ENCODE measurements at regions of chr2 and their contacts with region 1.

Region 1: DNA sequence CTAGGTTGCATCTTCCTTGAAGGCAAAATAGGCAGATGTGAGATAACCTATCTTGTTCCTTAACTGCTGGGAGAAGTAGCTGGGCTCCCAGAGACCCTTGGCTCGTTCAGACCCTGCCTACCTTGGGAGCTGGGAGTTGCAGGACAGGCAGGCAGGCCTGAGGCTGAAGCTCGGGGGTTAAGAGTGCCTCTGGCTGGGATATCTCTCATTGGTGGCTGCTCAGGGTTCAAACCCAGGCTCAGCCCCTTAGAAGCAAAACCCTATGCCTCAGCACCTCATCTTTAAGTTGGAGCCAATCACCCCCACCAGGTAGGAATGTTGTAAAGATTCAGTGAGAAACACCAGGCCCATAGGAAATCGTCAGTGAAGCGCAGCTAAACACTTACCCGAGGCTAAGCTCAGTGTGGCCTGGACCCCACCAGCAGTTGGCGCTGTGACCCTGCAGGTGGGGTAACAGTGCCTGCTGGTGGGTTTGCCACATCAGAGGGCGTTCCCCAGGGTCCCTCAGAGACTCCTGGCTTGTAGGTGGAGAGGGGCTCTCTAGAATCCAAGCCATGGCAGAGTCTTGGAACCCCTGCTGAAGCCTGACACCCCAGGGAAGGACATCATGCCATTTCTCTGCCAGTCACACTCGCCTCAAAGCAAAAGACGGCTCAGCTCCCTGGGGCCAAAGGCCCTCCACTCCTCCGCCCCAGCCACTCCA is 54.6 kb upstream of the GPR17 start:
- DNase-seq: no peak
- H3K4me3 ChIP-seq: no peak overlapping the region
- CTCF ChIP-seq: peak; percentile 95

Region 2: GRCh38 chr2:126907671-126908070 is 683.7 kb before region 1 on chr2:
- CTCF ChIA-PET with region 1: no interaction called
- POLR2A ChIA-PET with region 1: no interaction called
- DNase-seq: no peak
- H3K4me3 ChIP-seq: no peak overlapping the region
- CTCF ChIP-seq: no peak

Region 3: DNA sequence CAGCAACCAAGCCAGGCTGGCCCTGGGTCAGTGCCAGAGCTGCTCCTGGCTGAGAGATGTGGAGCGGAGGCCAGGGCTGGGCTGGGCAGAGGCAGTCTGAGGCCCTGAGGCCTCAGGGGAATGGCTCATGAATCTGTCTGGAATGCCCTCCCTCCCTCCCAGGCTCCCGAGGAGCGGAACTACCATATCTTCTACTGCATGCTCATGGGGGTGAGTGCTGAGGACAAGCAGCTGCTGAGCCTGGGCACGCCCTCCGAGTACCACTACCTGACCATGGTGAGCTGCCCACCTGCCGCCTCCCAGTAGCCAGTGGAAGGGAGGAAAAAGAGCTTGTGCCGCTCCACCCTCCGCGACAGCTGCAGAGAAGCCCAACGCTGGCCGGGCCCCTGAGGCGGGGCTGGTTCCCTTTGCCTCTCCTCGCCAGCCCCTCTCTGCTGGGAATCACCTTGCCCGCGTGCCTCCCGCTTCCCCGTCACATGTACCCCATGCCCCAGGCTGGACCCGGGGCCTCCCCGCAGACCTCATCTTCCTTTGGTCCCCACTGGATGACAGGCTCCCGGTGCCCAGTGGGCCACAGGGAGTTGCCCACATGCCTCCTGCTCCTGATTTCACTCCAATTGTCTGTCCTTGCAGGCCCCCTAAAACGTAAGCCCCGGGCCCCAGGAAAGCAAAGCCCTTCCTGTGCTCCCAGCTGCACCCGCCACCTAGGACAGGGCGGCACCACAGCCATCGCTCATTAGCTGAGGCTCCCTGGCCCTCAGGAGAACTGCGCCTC is 14.8 kb before region 1 on chr2:
- CTCF ChIA-PET with region 1: interaction called, 35 read pairs
- POLR2A ChIA-PET with region 1: no interaction called
- DNase-seq: peak; percentile 26
- H3K4me3 ChIP-seq: no peak overlapping the region
- CTCF ChIP-seq: no peak

Region 4: DNA sequence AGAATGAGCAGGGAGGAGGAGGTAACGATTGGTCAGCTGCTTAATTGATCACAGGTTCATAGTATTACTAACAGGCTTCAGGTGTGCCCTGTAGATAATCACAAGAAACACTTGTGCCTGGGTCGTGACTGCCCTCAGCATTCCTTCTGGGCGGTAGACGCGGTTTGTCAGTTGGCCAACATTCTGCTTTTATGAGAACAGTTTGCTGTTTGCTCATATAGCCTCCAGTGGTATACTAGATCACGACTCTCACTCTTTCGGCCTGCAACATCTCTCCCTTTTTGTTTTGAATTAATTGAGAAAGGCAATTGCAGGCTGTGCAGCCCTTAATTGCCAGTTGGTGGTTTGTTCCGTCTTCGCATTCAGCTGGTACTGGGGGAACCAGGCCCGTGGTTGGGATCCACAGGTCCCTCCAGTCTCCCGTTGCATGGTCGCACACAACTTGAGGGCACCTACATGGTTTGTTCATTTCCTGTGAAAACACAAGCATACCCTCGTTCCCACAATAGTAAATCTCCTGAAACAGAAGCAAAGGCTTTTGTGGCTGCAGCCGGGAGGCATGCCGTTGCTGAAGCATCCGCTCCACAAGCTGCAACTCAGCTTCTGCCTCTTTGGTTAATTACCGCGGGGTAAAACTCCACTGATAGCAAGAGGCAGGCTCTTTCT is 24.3 kb after region 1 on chr2:
- CTCF ChIA-PET with region 1: interaction called, 15 read pairs
- POLR2A ChIA-PET with region 1: no interaction called
- DNase-seq: no peak
- H3K4me3 ChIP-seq: no peak overlapping the region
- CTCF ChIP-seq: no peak

Region 5: GRCh38 chr2:127644066-127645025 is 53.0 kb after region 1 on chr2:
- CTCF ChIA-PET with region 1: interaction called, 119 read pairs
- POLR2A ChIA-PET with region 1: interaction called, 3 read pairs
- DNase-seq: no peak
- H3K4me3 ChIP-seq: no peak overlapping the region
- CTCF ChIP-seq: no peak

Region 6: DNA sequence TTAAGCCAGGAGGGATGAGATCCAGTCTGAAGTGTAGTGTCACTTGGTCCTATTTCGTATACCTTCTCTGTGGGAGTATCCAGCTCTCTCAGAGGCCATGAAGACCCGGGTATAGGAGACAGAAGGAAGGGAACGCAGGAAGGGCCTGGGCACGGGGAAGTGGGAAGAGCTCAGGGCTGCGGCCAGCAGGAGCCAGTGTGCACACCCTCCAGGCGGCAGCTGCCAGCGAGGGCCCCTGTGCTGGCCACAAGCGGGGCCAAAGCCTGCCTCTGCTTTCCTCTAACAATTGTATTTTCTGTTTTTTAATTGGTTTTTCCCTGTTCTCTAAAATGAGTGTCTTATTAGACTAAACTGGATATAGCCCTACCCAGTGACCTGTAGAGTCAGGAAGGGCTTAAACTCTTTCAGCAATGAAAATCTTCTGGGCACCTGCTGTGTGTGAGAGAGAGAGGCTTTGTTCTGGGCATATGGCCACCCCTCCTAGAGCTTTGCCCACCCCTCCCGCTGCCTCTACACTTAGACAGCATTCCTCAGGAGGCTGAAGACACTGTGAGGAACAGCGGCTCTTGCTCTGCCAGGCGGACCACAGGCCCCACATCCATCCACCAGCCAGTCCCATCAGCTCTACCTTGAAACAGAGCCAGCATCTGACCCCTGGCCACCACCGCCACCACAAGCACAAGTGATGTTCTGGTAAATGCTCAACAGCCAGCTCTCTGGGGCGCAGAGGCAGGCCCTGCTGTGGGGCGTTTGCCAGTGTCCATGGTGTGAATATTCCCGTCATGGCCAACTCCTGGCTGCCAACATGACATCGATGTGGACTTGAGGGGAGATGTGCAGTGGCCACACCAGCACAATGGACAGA is 64.1 kb after region 1 on chr2:
- CTCF ChIA-PET with region 1: interaction called, 119 read pairs
- POLR2A ChIA-PET with region 1: no interaction called
- DNase-seq: no peak
- H3K4me3 ChIP-seq: no peak overlapping the region
- CTCF ChIP-seq: no peak

Region 7: DNA sequence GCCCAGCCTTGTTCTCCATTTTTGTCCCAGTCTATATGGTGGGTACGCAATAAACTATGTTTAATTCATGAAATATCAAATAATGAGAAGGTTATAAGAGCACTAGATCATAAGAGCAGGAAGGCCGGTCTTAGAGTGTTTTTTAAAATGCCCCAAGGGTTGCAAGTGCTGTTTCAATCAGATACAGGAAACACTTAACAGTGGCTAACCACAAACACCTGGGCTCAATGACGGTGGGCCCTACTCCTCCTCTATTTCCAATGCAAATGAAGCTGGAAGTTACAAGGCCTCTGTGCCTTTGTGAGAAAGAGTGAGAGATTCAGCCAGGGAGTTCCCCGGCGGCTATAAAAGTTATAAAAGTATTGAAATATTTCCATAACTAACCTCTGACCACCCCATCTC is 238.5 kb after region 1 on chr2:
- CTCF ChIA-PET with region 1: no interaction called
- POLR2A ChIA-PET with region 1: no interaction called
- DNase-seq: no peak
- H3K4me3 ChIP-seq: no peak overlapping the region
- CTCF ChIP-seq: no peak